MCF 10A (cell line): ENCODE measurements at regions of chr6 and their contacts with region 1.

Region 1: GRCh38 chr6:37018198-37019064 is 13.0 kb downstream of the FGD2 start:
- DNase-seq: peak; percentile 87
- H3K4me3 Mint-ChIP-seq: no peak overlapping the region
- H3K27ac Mint-ChIP-seq: no peak overlapping the region
- H3K4me1 Mint-ChIP-seq: peaks cover 26% of the 10 kb centered on the region
- H3K27me3 Mint-ChIP-seq: no peaks in the 10 kb centered on the region
- CTCF ChIP-seq: peak; percentile 72

Region 2: DNA sequence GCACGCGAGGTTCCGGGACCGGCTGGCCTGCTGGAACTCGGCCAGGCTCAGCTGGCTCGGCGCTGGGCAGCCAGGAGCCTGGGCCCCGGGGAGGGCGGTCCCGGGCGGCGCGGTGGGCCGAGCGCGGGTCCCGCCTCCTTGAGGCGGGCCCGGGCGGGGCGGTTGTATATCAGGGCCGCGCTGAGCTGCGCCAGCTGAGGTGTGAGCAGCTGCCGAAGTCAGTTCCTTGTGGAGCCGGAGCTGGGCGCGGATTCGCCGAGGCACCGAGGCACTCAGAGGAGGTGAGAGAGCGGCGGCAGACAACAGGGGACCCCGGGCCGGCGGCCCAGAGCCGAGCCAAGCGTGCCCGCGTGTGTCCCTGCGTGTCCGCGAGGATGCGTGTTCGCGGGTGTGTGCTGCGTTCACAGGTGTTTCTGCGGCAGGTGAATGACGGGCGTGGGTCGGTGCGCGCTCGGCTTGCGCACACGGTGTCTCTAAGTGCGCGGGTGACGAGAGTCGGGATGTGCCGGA is 339.9 kb before region 1 on chr6 and contains the start of gene CDKN1A:
- CTCF ChIA-PET with region 1: no interaction called
- POLR2A ChIA-PET with region 1: no interaction called
- intact Hi-C with region 1: no loop called
- DNase-seq: peak; percentile 90
- H3K4me3 Mint-ChIP-seq: peak within 1 kb of the TSS; percentile 87
- H3K27ac Mint-ChIP-seq: peak within 1 kb of the TSS; percentile 97
- H3K4me1 Mint-ChIP-seq: peaks cover 29% of the 10 kb centered on the region
- H3K27me3 Mint-ChIP-seq: no peaks in the 10 kb centered on the region
- CTCF ChIP-seq: no peak
- total RNA-seq, gene CDKN1A: 407 and 489 TPM in 2 replicates

Region 3: GRCh38 chr6:36885461-36886401 is 132.7 kb before region 1 on chr6 and contains the start of gene C6orf89:
- CTCF ChIA-PET with region 1: interaction called, 59 read pairs
- POLR2A ChIA-PET with region 1: interaction called, 23 read pairs
- intact Hi-C with region 1: loop called (anchors 1 kb)
- DNase-seq: peak; percentile 99
- H3K4me3 Mint-ChIP-seq: peak within 1 kb of the TSS; percentile 80
- H3K27ac Mint-ChIP-seq: peak within 1 kb of the TSS; percentile 88
- H3K4me1 Mint-ChIP-seq: peaks cover 16% of the 10 kb centered on the region
- H3K27me3 Mint-ChIP-seq: no peaks in the 10 kb centered on the region
- CTCF ChIP-seq: peak; percentile 63
- total RNA-seq, gene C6orf89: 36.9 and 43.1 TPM in 2 replicates

Region 4: DNA sequence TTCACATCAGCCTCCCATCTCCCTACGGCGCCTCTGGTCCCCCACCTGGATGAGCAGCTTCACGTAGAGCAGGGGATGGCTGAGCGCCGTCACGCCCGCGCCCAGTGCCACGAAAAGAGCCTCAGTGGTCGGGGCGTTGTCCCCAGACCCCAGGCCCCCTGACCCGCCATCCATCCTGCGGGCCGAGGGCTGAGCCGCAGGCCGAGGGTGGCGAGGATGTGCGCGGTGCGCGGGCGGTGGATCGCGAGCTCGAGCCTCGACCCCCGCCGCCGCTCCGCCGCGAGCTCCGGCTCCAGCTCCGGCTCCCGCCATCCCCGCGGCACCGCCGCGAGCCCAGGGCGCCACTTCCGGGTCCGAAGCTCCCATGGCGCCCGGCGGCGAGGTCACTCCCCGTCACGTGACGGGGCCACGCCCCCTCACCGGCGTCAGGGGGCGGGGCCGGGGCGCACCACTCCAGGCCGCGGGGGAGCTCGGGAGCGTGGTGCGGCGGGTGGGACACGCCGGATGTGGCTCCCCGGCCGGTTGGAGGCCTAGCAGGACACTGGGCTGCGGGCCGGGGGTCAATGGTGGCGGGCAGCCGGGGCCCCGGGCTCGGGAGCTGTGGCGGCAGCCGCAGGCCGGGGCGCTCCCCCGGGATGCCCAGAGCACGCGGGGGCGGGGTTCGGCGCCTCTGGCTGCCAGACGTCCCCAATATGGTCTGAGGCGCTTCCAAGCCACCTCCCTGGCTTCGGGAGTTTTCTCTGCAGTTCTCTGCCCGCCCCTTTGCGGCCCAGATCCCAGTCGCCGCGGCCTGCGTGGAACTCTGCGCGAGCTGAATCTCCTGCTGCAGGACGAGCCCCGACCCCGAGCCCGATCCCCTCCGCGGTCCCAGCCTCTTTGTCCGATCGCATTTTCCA is 32.4 kb before region 1 on chr6 and contains the start of gene MTCH1:
- CTCF ChIA-PET with region 1: interaction called, 8 read pairs
- POLR2A ChIA-PET with region 1: interaction called, 11 read pairs
- intact Hi-C with region 1: no loop called
- DNase-seq: peak; percentile 86
- H3K4me3 Mint-ChIP-seq: no peak within 1 kb of the TSS
- H3K27ac Mint-ChIP-seq: no peak within 1 kb of the TSS
- H3K4me1 Mint-ChIP-seq: peaks cover 14% of the 10 kb centered on the region
- H3K27me3 Mint-ChIP-seq: no peaks in the 10 kb centered on the region
- CTCF ChIP-seq: no peak
- total RNA-seq, gene MTCH1: 74.9 and 78.2 TPM in 2 replicates

Region 5: DNA sequence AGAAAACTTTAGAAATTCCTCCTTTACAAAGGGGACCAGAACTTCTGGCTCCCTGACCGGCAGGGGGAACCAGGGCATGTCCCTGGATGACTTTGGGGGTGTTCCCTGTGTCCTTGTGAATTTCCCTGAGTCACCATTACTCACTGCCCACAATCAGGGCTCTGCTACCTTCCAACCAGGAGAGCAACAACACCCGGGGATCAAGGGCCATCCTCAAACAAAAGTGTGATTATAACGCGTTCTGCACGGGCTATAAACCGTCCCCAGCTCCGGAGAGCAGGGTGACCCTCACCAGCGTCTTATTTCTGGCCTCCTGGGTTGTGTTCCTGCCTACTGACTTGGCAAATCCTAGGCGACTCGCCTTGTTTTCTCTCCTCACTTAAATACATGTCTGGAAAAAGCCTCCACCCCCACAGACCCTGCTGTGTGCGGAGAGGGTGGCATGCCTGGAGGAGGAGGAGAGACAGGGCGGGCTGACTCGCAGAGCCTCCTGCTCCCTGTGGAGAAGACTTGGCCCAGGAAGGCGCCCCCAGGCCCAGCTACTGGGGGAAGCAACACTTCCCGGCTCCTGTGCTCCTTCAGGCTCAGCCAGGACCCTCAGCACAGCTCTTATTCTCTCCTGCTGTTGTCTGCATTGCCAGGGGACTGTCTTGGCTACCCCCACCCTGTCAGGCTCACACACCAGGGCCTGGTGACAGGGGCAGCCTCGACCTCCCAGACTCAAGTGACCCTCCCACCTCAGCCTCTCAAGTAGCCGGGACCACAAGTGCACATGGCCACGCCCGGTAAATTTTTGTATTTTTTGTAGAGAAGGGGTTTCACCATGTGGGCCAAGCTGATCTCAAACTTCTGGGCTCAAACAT is 41.1 kb after region 1 on chr6:
- CTCF ChIA-PET with region 1: interaction called, 314 read pairs
- POLR2A ChIA-PET with region 1: interaction called, 50 read pairs
- intact Hi-C with region 1: no loop called
- DNase-seq: peak; percentile 97
- H3K4me3 Mint-ChIP-seq: peak overlapping the region; percentile 46
- H3K27ac Mint-ChIP-seq: peak overlapping the region; percentile 91
- H3K4me1 Mint-ChIP-seq: peaks cover 31% of the 10 kb centered on the region
- H3K27me3 Mint-ChIP-seq: no peaks in the 10 kb centered on the region
- CTCF ChIP-seq: peak; percentile 66

Region 6: DNA sequence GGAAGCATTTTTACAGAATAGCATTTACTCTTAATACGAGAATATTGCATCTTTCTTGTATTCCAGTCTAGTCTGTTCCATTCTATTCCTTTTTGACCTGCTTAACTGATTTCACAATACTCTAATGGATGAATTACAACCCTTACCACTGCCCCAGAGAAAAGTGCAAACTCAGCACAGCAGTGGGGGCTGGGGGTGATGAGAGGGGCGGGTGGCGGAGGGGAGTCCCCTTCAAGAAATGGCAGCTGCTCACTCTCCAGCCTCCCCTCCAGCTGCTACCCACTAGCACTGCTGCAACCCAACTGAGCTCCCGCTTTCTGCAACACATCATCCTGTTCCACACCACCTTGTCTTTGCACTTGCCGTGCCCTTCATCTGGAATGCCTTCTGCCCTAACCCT is 181.7 kb after region 1 on chr6:
- CTCF ChIA-PET with region 1: interaction called, 228 read pairs
- POLR2A ChIA-PET with region 1: interaction called, 3 read pairs
- intact Hi-C with region 1: no loop called
- DNase-seq: no peak
- H3K4me3 Mint-ChIP-seq: no peak overlapping the region
- H3K27ac Mint-ChIP-seq: no peak overlapping the region
- H3K4me1 Mint-ChIP-seq: peaks cover 7% of the 10 kb centered on the region
- H3K27me3 Mint-ChIP-seq: peaks cover 10% of the 10 kb centered on the region
- CTCF ChIP-seq: no peak